Esophagus squamous epithelium (tissue), 5 donors: ENCODE measurements at regions of chr16 and their contacts with region 1.

Region 1: GRCh38 chr16:15672514-15673167 is 22.6 kb downstream of the NDE1 start:
- DNase-seq: peak; percentile 58
- H3K4me3 ChIP-seq: peak overlapping the region in 3 of 4 donors; percentile 12 to 33 (median 23)
- H3K27ac ChIP-seq: peak overlapping the region; percentile 86 to 96 (median 92)
- H3K4me1 ChIP-seq: peaks cover 19 to 58% (median 24%) of the 10 kb centered on the region in 3 donors
- H3K27me3 ChIP-seq: no peaks in the 10 kb centered on the region
- CTCF ChIP-seq: no peak
- POLR2A ChIP-seq: peak in 2 of 4 donors; percentile 28 to 62

Region 2: DNA sequence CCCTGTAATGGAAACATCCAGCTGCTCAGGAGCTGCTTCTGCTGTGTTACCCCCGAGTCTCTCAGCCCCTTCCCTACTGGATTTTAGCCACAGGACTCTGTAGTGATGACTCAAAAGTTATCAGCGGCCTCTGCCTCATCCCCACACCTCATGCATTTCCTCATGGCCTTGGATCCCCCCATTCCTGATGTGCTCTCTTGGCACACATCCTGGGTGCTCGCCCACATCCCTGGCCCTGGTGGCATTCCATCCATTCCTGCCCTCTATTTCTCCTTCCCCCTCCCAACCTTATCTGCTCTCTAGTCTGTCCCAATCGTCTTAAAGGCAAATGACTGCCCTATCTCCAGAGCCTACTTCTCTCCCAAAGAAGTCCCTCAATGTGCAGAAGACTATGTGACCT is 54.2 kb before region 1 on chr16:
- intact Hi-C with region 1: loop called (anchors 10 kb)
- DNase-seq: no peak
- H3K4me3 ChIP-seq: no peak overlapping the region
- H3K27ac ChIP-seq: no peak overlapping the region
- H3K4me1 ChIP-seq: no peaks in the 10 kb centered on the region
- H3K27me3 ChIP-seq: no peaks in the 10 kb centered on the region
- CTCF ChIP-seq: no peak
- POLR2A ChIP-seq: no peak

Region 3: GRCh38 chr16:15714393-15715172 is 41.9 kb after region 1 on chr16:
- intact Hi-C with region 1: no loop called
- DNase-seq: no peak
- H3K4me3 ChIP-seq: no peak overlapping the region
- H3K27ac ChIP-seq: no peak overlapping the region
- H3K4me1 ChIP-seq: peaks cover 0 to 7% (median 0%) of the 10 kb centered on the region in 3 donors
- H3K27me3 ChIP-seq: no peaks in the 10 kb centered on the region
- CTCF ChIP-seq: no peak
- POLR2A ChIP-seq: no peak

Region 4: GRCh38 chr16:16004314-16004749 is 331.7 kb after region 1 on chr16:
- intact Hi-C with region 1: no loop called
- DNase-seq: no peak
- H3K4me3 ChIP-seq: no peak overlapping the region
- H3K27ac ChIP-seq: peak overlapping the region in 3 of 4 donors; percentile 56 to 65 (median 59)
- H3K4me1 ChIP-seq: peaks cover under 1 to 12% (median 3%) of the 10 kb centered on the region in 3 donors
- H3K27me3 ChIP-seq: no peaks in the 10 kb centered on the region
- CTCF ChIP-seq: no peak
- POLR2A ChIP-seq: no peak